Naive thymus-derived CD4-positive, alpha-beta T cell (primary cell): ENCODE measurements at regions of chr5 and their contacts with region 1.

Region 1: DNA sequence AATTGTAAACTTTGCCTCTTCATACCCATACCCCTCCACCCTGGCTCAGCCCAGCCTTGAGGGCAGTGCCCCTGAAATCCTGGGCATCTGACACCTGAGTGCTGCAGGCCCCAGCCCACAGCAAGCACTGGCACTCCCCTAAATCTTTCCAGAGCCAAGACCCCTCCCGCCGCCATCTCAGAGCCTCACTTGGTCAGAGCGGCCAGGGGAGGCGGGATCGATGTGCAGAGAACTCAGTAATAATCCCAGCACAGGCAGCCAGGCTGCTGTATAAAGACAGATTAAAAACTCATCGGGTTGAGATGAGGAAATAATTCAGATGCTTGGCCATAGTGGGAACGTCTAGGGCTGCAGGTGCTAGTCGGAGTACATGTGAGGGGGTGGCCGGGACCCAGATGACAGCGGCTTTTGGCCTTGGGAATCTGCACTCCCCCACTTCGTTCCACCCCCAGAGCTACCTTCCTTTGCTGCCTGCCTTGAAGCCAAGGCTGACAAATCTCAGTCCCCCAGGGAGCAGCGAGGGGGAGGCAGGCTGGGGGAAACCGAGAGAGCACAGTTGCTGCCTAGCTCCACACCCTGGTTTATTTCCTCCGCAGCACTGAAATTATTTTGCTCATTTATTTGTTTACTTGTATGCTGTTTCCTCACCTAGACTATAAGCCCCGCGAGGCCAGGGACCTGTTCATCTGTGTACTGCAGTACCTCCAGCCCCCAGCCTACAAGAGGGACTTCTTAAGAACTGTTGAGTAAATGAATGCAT is 19.5 kb upstream of the ARAP3 start:
- DNase-seq: no peak
- ATAC-seq: peak; percentile 28
- H3K4me3 ChIP-seq: peak overlapping the region; percentile 58
- H3K4me3 Mint-ChIP-seq: peak overlapping the region in 7 of 10 donors; percentile 76 to 89 (median 83)
- H3K27ac ChIP-seq: no peak overlapping the region
- H3K27ac Mint-ChIP-seq: peak overlapping the region in 4 of 9 donors; percentile 14 to 54 (median 18)
- H3K4me1 ChIP-seq: peaks cover 9 to 11% of the 10 kb centered on the region in 2 donors
- H3K4me1 Mint-ChIP-seq: peaks cover 5 to 20% (median 12%) of the 10 kb centered on the region in 7 donors
- H3K27me3 ChIP-seq: no peaks in the 10 kb centered on the region
- H3K27me3 Mint-ChIP-seq: peaks cover 25 to 47% (median 40%) of the 10 kb centered on the region in 5 donors

Region 2: GRCh38 chr5:141681695-141682641 is 19.6 kb before region 1 on chr5 and contains the start of gene ARAP3:
- CTCF ChIA-PET with region 1: interaction called, 7 read pairs
- POLR2A ChIA-PET with region 1: interaction called, 9 read pairs
- intact Hi-C with region 1: loop called in 1 of 2 experiments (anchors 1 kb)
- DNase-seq: peak in 2 of 9 donors; percentile 35 to 64
- ATAC-seq: peak; percentile 84
- H3K4me3 ChIP-seq: peak within 1 kb of the TSS; percentile 64
- H3K4me3 Mint-ChIP-seq: peak within 1 kb of the TSS; percentile 65 to 84 (median 78)
- H3K27ac ChIP-seq: peak within 1 kb of the TSS; percentile 32
- H3K27ac Mint-ChIP-seq: peak within 1 kb of the TSS in 8 of 9 donors; percentile 4 to 77 (median 46)
- H3K4me1 ChIP-seq: peaks cover 14 to 16% of the 10 kb centered on the region in 2 donors
- H3K4me1 Mint-ChIP-seq: peaks cover 15 to 36% (median 27%) of the 10 kb centered on the region in 7 donors
- H3K27me3 ChIP-seq: no peaks in the 10 kb centered on the region
- H3K27me3 Mint-ChIP-seq: no peaks in the 10 kb centered on the region
- total RNA-seq, gene ARAP3: 1.0 to 15.3 (median 9.8) TPM

Region 3: GRCh38 chr5:141811287-141812155 is 110.0 kb after region 1 on chr5:
- CTCF ChIA-PET with region 1: interaction called, 3 read pairs
- POLR2A ChIA-PET with region 1: no interaction called
- intact Hi-C with region 1: loop called (anchors 1 to 5 kb)
- DNase-seq: peak in 5 of 9 donors; percentile 7 to 23 (median 18)
- ATAC-seq: peak; percentile 71
- H3K4me3 ChIP-seq: no peak overlapping the region
- H3K4me3 Mint-ChIP-seq: peak overlapping the region in 1 of 10 donors; percentile 25
- H3K27ac ChIP-seq: no peak overlapping the region
- H3K27ac Mint-ChIP-seq: no peak overlapping the region
- H3K4me1 ChIP-seq: no peaks in the 10 kb centered on the region
- H3K4me1 Mint-ChIP-seq: peaks cover 0 to 8% (median 0%) of the 10 kb centered on the region in 7 donors
- H3K27me3 ChIP-seq: no peaks in the 10 kb centered on the region
- H3K27me3 Mint-ChIP-seq: peaks cover 46 to 64% (median 49%) of the 10 kb centered on the region in 5 donors